Astrocyte of the cerebellum (primary cell): ENCODE measurements at regions of chr3 and their contacts with region 1.

Region 1: GRCh38 chr3:158790901-158791589 is 10.8 kb upstream of the MFSD1 start:
- DNase-seq: no peak
- H3K4me3 ChIP-seq: no peak overlapping the region
- CTCF ChIP-seq: peak; percentile 78

Region 2: DNA sequence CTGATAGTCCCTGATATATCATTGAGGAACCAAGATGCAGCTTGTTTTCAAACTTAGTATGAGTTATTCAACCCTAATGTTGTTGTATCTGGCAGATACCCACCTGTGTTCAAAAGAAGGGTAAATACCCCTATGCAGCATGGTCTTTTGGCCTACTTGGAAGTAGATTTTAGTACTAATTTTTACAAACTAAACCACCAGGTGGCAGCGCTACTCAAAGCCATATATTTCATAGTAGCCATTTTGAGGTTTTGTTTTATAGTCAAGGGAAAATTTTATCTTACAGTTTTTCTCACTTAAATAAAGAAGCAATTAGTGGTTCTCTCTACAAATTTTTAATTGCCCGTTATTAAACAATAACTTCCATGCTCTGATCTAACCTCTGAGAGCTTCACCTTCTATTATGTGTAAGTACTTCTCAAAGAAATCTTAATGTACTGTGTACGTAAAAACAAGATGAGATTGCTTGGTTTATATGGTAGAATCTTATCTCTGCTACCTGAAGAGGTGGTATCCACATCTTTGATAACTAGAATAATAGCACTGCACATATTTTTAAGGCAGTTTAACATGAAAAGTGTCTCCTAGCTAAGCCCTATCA is 251.5 kb before region 1 on chr3:
- in situ Hi-C with region 1: loop called (anchors 25 kb)
- DNase-seq: peak; percentile 51
- H3K4me3 ChIP-seq: no peak overlapping the region
- CTCF ChIP-seq: peak; percentile 44

Region 3: GRCh38 chr3:158659454-158660237 is 131.4 kb before region 1 on chr3:
- in situ Hi-C with region 1: loop called (anchors 10 kb)
- DNase-seq: peak; percentile 56
- H3K4me3 ChIP-seq: no peak overlapping the region
- CTCF ChIP-seq: peak; percentile 76

Region 4: DNA sequence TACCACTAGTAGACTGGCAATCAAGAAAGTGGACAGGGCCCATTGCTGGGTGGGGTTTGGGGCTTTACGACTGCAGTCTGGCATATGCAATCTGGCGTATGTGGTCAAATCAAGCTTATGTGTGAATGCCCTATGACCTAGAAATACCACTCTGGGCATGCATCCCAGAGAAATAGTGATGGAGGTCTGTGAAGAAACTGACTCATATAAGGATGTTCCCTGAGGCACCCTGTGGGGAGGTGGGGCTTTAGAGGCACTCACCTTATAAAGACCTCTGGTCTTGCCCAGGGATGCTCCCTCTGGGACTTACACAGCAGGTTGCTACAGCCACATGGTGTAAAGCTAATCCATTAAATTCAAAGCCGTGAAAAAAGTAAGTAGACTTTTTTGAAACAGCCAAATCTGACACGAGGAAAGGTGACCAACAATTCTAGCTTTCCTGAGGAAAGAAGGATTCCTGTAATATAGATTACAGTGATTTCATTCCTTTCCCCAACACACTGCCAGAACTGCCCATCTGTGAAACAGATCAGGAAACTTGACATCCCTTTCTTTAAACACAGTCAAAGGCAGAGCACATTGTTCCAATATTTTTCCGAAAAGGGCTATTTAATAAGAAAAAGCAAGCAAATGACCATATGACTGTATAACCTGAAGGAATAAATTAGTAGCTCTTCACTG is 72.4 kb before region 1 on chr3:
- in situ Hi-C with region 1: loop called (anchors 5 kb)
- DNase-seq: peak; percentile 98
- H3K4me3 ChIP-seq: no peak overlapping the region
- CTCF ChIP-seq: no peak